K562 (cell line): ENCODE measurements at regions of chrX and their contacts with region 1.

Region 1: GRCh38 chrX:9966775-9967408 is at the start of gene CLDN34:
- DNase-seq: peak; percentile 10 to 31 (median 13)
- ATAC-seq: peak; percentile 51; the same call in 2 of the 3 replicates
- H3K4me3 ChIP-seq: no peak within 1 kb of the TSS
- H3K27ac ChIP-seq: no peak within 1 kb of the TSS
- H3K4me1 ChIP-seq: no peaks in the 10 kb centered on the region
- H3K27me3 ChIP-seq: peaks cover 0 to 10% of the 10 kb centered on the region in 2 experiments; a peak in 2 of 5 replicates
- CTCF ChIP-seq: peak; percentile 36 to 51 (median 44); a peak in 4 of 6 replicates
- EP300 ChIP-seq: no peak
- POLR2A ChIP-seq: no peak
- RAD21 ChIP-seq: peak; percentile 22 to 58; a peak in 2 of 4 replicates
- polyA plus RNA-seq, gene CLDN34: not detected

Region 2: DNA sequence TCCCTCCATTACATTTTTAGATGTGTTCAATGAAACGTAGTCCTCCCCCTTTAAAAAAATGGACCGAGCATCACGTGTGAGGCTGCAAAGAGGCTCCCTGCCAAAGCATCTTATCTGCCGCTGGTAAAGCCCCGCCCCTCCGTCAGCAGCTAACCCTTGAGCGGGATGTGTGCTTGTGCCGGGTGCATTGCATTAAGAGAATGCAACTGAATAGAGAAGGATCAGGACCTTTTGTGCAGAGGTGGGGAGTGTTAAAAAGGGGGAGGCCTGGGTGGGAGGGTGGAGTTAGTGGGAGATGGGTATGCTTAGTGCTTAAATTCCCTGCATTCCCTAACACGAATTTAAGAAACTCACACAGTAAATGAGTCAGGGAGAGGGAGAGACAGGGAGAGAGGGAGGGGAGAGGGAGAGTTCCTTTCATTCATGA is 436.0 kb before region 1 on chrX:
- CTCF ChIA-PET with region 1: no interaction called
- POLR2A ChIA-PET with region 1: no interaction called
- in situ Hi-C with region 1: no loop called
- intact Hi-C with region 1: no loop called
- DNase-seq: peak; percentile 67 to 85 (median 75)
- ATAC-seq: peak; percentile 97
- H3K4me3 ChIP-seq: no peak overlapping the region
- H3K27ac ChIP-seq: no peak overlapping the region
- H3K4me1 ChIP-seq: peaks cover 13 to 20% of the 10 kb centered on the region in 2 experiments; a peak in 4 of 5 replicates
- H3K27me3 ChIP-seq: no peaks in the 10 kb centered on the region
- CTCF ChIP-seq: no peak
- EP300 ChIP-seq: no peak
- POLR2A ChIP-seq: no peak
- RAD21 ChIP-seq: no peak

Region 3: DNA sequence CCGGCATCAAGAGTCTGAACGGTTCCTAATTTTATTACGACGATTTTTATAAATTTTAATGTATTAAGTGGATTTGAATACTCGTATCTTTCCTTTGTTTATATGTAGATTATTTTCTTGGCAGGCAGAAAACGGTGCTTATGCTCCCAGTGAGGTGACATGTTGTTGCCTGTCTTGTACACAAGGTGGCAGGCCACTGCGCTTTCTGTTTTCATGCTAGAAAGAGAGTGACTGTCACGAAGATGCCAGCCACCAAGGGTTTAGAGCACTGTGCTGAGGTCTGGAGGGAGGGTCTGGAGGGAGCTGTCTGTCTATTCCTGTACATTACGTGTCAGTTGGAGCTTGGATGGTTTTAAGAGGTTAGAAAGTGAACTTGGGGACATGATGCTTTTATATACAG is 92.9 kb before region 1 on chrX:
- CTCF ChIA-PET with region 1: no interaction called
- POLR2A ChIA-PET with region 1: no interaction called
- in situ Hi-C with region 1: no loop called
- intact Hi-C with region 1: loop called (anchors 2 kb)
- DNase-seq: peak; percentile 25 to 47 (median 39)
- ATAC-seq: peak; percentile 86
- H3K4me3 ChIP-seq: no peak overlapping the region
- H3K27ac ChIP-seq: no peak overlapping the region
- H3K4me1 ChIP-seq: no peaks in the 10 kb centered on the region
- H3K27me3 ChIP-seq: peaks cover 2 to 16% of the 10 kb centered on the region in 2 experiments; a peak in 2 of 5 replicates
- CTCF ChIP-seq: peak; percentile 47 to 69 (median 49); a peak in 5 of 6 replicates
- EP300 ChIP-seq: no peak
- POLR2A ChIP-seq: no peak
- RAD21 ChIP-seq: peak in 1 of 2 experiments; percentile 52; a peak in 2 of 4 replicates

Region 4: GRCh38 chrX:9885150-9885549 is 81.7 kb before region 1 on chrX:
- CTCF ChIA-PET with region 1: no interaction called
- POLR2A ChIA-PET with region 1: no interaction called
- in situ Hi-C with region 1: no loop called
- intact Hi-C with region 1: loop called (anchors 2 kb)
- DNase-seq: peak; percentile 31 to 56 (median 42)
- ATAC-seq: peak; percentile 94
- H3K4me3 ChIP-seq: no peak overlapping the region
- H3K27ac ChIP-seq: no peak overlapping the region
- H3K4me1 ChIP-seq: no peaks in the 10 kb centered on the region; a peak in 2 of 5 replicates
- H3K27me3 ChIP-seq: peaks cover 0 to 3% of the 10 kb centered on the region in 2 experiments; a peak in 2 of 5 replicates
- CTCF ChIP-seq: peak; percentile 58 to 78 (median 67)
- EP300 ChIP-seq: no peak
- POLR2A ChIP-seq: no peak
- RAD21 ChIP-seq: peak in 1 of 2 experiments; percentile 53; a peak in 2 of 4 replicates